GM12878 (cell line): ENCODE measurements at regions of chr12 and their contacts with region 1.

Region 1: DNA sequence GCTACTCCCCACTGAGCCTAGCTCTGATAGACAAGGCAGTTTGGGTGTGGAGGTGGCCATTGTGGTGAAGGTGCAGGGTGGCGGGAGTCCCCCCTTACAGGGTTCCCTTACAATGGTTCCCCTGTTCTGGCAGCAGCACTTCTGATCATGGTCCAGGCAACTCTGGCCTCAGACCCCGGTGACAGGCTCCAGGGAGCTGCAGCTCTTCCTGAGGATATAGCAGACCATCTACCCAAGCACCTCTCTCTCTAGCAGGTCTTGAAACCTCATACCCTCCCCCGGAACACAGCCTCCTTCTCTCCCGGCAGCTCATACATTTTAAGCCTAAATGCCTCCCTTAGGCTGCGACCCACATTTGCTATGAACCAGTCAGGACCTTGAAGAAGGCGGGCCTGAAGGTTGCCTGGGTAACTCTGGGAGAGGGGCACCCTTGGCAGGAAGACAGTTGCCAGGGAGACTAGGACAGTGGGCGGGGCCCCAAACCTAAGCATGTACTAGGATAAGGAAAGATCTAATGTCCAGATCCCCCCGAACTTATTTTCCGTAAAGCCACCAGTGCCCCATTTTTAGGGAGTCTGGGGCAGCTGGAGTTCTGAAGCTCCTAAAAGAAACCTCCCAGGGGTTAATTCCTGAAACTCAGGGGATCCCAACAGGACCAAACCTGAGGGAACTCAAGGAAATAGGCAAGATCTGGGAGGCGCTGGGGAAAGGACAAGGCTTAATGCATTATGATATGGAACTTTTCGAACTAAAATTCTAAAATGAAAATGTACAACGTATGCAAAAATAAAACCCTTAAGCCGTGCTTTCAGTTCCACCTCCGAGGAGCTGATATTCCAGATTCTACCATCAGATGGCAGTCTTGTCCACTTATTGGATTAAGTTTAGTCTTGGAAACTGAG is 4.5 kb upstream of the GDF11 start:
- DNase-seq: peak; percentile 77
- ATAC-seq: peak; percentile 93
- H3K4me3 ChIP-seq: peak overlapping the region; percentile 78
- H3K27ac ChIP-seq: peak overlapping the region; percentile 45
- H3K4me1 ChIP-seq: peaks cover 7% of the 10 kb centered on the region
- H3K27me3 ChIP-seq: no peaks in the 10 kb centered on the region
- CTCF ChIP-seq: peak; percentile 68 to 89 (median 87); a peak in 5 of 6 replicates
- EP300 ChIP-seq: no peak
- POLR2A ChIP-seq: no peak
- RAD21 ChIP-seq: peak; percentile 96

Region 2: DNA sequence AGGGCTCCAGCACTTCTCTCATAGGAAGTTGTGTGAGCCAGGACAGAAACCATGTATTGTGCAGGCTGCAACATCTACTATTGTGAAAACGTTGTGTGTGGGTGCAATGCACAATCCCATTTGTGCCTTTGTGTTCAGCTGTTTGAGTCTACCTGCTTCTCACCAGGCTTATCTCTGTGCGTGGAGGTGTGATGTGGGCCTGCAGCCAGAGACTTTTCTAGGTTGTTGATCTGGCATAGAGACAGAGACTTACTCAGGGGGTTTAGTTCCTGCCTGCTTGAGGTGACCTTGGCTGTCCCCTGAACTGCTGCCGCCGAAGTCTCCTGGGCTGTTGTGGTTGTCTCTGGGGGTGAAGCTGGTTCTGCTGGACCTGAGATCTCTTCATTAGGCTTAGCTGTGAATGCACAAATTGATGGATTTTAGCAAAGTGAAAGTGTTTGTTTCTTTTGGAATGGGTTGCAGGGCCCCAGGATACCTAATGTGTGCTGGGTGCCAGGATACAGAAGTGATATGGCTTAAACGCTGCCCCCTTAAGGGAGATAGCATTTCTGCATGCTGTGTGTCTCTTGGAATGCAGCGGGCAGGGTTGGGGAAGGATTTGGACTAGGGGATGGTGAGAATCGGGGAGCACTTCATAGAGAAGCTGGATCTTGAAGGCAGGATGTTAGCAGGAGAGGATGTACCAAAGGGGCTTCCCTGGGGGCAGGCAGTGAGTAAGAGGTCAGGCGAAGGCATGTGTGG is 1106.2 kb before region 1 on chr12:
- CTCF ChIA-PET with region 1: no interaction called
- POLR2A ChIA-PET with region 1: no interaction called
- RAD21 ChIA-PET with region 1: no interaction called
- SMC1A ChIA-PET with region 1: no interaction called
- in situ Hi-C with region 1: no loop called
- intact Hi-C with region 1: no loop called
- DNase-seq: no peak
- ATAC-seq: no peak
- H3K4me3 ChIP-seq: no peak overlapping the region
- H3K27ac ChIP-seq: no peak overlapping the region
- H3K4me1 ChIP-seq: no peaks in the 10 kb centered on the region
- H3K27me3 ChIP-seq: no peaks in the 10 kb centered on the region; a peak in 1 of 4 replicates
- CTCF ChIP-seq: no peak
- EP300 ChIP-seq: no peak
- POLR2A ChIP-seq: no peak
- RAD21 ChIP-seq: no peak

Region 3: GRCh38 chr12:54958048-54958658 is 780.2 kb before region 1 on chr12:
- CTCF ChIA-PET with region 1: no interaction called
- POLR2A ChIA-PET with region 1: no interaction called
- RAD21 ChIA-PET with region 1: no interaction called
- SMC1A ChIA-PET with region 1: no interaction called
- in situ Hi-C with region 1: no loop called
- intact Hi-C with region 1: no loop called
- DNase-seq: peak; percentile 44
- ATAC-seq: peak; percentile 70
- H3K4me3 ChIP-seq: no peak overlapping the region
- H3K27ac ChIP-seq: no peak overlapping the region
- H3K4me1 ChIP-seq: peaks cover 19% of the 10 kb centered on the region
- H3K27me3 ChIP-seq: no peaks in the 10 kb centered on the region
- CTCF ChIP-seq: peak; percentile 47 to 84 (median 60); a peak in 4 of 6 replicates
- EP300 ChIP-seq: no peak
- POLR2A ChIP-seq: no peak
- RAD21 ChIP-seq: peak; percentile 88

Region 4: DNA sequence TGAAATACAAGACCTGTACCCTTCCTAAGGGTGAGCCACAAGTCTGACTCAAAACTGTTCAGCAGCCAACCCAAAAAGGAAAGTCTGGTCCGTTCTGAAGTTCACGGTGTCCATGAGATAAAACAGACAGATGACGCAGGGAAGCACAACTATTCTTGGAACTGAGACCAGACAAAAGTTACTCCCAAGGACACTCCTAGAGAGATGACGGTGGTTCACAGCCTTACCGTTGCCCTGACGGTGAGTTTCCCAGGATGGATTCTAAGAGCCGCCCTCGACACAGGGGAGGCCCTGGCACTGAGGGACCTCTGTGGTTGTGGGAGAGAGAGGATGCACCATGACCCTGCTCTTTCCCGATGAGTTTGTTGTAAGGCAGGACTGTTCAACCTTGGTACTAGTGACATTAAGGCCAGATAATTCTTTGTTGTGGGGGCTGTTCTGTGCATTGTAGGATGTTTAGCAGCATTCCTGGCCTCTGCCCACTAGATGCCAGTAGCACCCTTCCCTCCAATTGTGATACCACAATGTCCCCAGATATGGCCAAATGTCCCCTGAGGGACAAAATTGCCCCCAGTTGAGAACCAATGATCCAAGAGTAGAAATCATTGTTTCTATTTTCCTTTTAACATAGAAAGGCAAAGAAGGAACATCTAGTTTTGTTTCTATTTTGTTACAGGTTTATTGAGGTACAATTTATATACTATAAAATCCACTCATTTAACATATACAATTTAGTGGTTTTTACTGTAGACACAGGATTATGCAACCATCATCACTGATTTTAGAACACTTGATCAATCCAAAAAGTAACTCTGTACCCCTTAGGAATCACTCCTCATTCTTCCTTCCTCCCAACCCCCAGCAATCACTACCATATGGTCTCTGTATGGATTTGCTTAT is 78.6 kb before region 1 on chr12:
- CTCF ChIA-PET with region 1: interaction called, 39 read pairs
- POLR2A ChIA-PET with region 1: no interaction called
- RAD21 ChIA-PET with region 1: interaction called, 12 read pairs
- SMC1A ChIA-PET with region 1: interaction called, 17 read pairs
- in situ Hi-C with region 1: no loop called
- intact Hi-C with region 1: loop called (anchors 1 kb)
- DNase-seq: no peak
- ATAC-seq: peak; percentile 85
- H3K4me3 ChIP-seq: no peak overlapping the region
- H3K27ac ChIP-seq: no peak overlapping the region
- H3K4me1 ChIP-seq: no peaks in the 10 kb centered on the region
- H3K27me3 ChIP-seq: no peaks in the 10 kb centered on the region
- CTCF ChIP-seq: peak; percentile 50 to 66 (median 66)
- EP300 ChIP-seq: no peak
- POLR2A ChIP-seq: no peak
- RAD21 ChIP-seq: peak; percentile 84

Region 5: DNA sequence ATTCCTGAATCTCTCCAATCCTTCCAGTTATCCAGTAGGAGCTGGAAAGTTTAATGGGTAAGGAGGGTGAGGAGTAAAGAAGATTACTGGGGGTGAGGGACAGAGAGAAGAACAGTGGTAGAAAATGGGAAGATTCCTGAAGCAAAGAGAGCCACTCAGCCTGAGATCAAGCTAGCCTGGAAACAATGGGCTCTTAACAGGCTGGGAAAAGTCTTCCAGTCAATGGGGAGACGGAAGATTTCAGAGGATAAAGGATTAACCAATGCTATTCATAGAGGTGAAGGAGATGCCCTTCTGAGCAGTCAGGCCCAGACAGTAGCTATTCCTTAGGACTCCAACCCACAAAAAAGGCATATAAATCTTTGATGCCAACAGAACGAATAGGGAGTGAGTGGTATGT is 19.3 kb after region 1 on chr12:
- CTCF ChIA-PET with region 1: interaction called, 12 read pairs
- POLR2A ChIA-PET with region 1: interaction called, 4 read pairs
- RAD21 ChIA-PET with region 1: interaction called, 3 read pairs
- SMC1A ChIA-PET with region 1: interaction called, 7 read pairs
- in situ Hi-C with region 1: no loop called
- intact Hi-C with region 1: no loop called
- DNase-seq: no peak
- ATAC-seq: no peak
- H3K4me3 ChIP-seq: no peak overlapping the region
- H3K27ac ChIP-seq: no peak overlapping the region
- H3K4me1 ChIP-seq: no peaks in the 10 kb centered on the region
- H3K27me3 ChIP-seq: no peaks in the 10 kb centered on the region
- CTCF ChIP-seq: no peak
- EP300 ChIP-seq: no peak
- POLR2A ChIP-seq: no peak
- RAD21 ChIP-seq: no peak

Region 6: GRCh38 chr12:55829967-55830600 is 91.7 kb after region 1 on chr12:
- CTCF ChIA-PET with region 1: interaction called, 19 read pairs
- POLR2A ChIA-PET with region 1: interaction called, 13 read pairs
- RAD21 ChIA-PET with region 1: interaction called, 11 read pairs
- SMC1A ChIA-PET with region 1: interaction called, 15 read pairs
- in situ Hi-C with region 1: no loop called
- intact Hi-C with region 1: loop called (anchors 2 kb)
- DNase-seq: no peak
- ATAC-seq: peak; percentile 25
- H3K4me3 ChIP-seq: peak overlapping the region; percentile 96
- H3K27ac ChIP-seq: peak overlapping the region; percentile 76
- H3K4me1 ChIP-seq: peaks cover 21% of the 10 kb centered on the region; the same call in 1 of the 2 replicates
- H3K27me3 ChIP-seq: no peaks in the 10 kb centered on the region
- CTCF ChIP-seq: no peak
- EP300 ChIP-seq: no peak
- POLR2A ChIP-seq: 0 out of 2 replicates have a peak, but pooled peaks have one; percentile 20
- RAD21 ChIP-seq: 0 out of 2 replicates have a peak, but pooled peaks have one; percentile 13

Region 7: GRCh38 chr12:55885113-55885512 is 146.7 kb after region 1 on chr12:
- CTCF ChIA-PET with region 1: no interaction called
- POLR2A ChIA-PET with region 1: no interaction called
- RAD21 ChIA-PET with region 1: no interaction called
- SMC1A ChIA-PET with region 1: no interaction called
- in situ Hi-C with region 1: no loop called
- intact Hi-C with region 1: no loop called
- DNase-seq: no peak
- ATAC-seq: no peak
- H3K4me3 ChIP-seq: no peak overlapping the region
- H3K27ac ChIP-seq: no peak overlapping the region
- H3K4me1 ChIP-seq: no peaks in the 10 kb centered on the region; the same call in 1 of the 2 replicates
- H3K27me3 ChIP-seq: no peaks in the 10 kb centered on the region
- CTCF ChIP-seq: no peak
- EP300 ChIP-seq: no peak
- POLR2A ChIP-seq: no peak
- RAD21 ChIP-seq: no peak

Region 8: DNA sequence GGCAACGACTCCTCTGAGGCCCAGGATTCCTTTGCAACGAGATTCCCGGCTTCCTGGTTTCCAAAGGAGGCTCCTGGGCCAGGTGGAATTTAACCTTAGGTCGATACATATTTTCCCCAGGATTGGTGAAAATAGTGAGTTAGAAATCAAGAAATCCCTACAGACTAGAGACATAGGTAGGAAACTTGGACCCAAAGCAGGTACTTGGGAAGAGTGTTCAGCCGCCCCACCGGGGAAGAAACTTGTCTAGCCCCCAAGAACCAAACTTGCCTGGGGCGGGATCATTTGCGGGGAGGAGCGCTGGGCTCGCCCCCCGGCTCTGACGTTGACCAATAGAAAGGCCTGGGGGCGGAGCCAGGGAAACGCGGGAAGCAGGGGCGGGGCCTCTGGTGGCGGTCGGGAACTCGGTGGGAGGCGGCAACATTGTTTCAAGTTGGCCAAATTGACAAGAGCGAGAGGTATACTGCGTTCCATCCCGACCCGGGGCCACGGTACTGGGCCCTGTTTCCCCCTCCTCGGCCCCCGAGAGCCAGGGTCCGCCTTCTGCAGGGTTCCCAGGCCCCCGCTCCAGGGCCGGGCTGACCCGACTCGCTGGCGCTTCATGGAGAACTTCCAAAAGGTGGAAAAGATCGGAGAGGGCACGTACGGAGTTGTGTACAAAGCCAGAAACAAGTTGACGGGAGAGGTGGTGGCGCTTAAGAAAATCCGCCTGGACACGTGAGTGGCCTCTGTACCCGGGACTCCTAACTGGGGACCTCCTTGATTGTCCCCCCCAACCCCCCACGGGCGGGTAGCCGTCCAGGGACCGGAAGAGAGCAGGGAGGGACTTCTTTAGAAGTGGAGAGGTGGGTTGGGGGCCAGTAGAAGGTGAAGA is 228.3 kb after region 1 on chr12 and contains the start of gene CDK2:
- CTCF ChIA-PET with region 1: interaction called, 11 read pairs
- POLR2A ChIA-PET with region 1: interaction called, 4 read pairs
- RAD21 ChIA-PET with region 1: interaction called, 11 read pairs
- SMC1A ChIA-PET with region 1: interaction called, 6 read pairs
- in situ Hi-C with region 1: no loop called
- intact Hi-C with region 1: no loop called
- DNase-seq: peak; percentile 40
- ATAC-seq: peak; percentile 91
- H3K4me3 ChIP-seq: peak within 1 kb of the TSS; percentile 96
- H3K27ac ChIP-seq: peak within 1 kb of the TSS; percentile 79
- H3K4me1 ChIP-seq: peaks cover 15% of the 10 kb centered on the region
- H3K27me3 ChIP-seq: no peaks in the 10 kb centered on the region
- CTCF ChIP-seq: no peak
- EP300 ChIP-seq: no peak
- POLR2A ChIP-seq: peak; percentile 81
- RAD21 ChIP-seq: no peak
- polyA plus RNA-seq, gene CDK2: 13.1 to 16.1 TPM

Region 9: GRCh38 chr12:56041552-56042429 is 303.4 kb after region 1 on chr12 and contains the start of gene RPS26:
- CTCF ChIA-PET with region 1: interaction called, 64 read pairs
- POLR2A ChIA-PET with region 1: interaction called, 12 read pairs
- RAD21 ChIA-PET with region 1: interaction called, 32 read pairs
- SMC1A ChIA-PET with region 1: interaction called, 37 read pairs
- in situ Hi-C with region 1: no loop called
- intact Hi-C with region 1: loop called (anchors 1 kb)
- DNase-seq: peak; percentile 98
- ATAC-seq: peak; percentile 96
- H3K4me3 ChIP-seq: peak within 1 kb of the TSS; percentile 98
- H3K27ac ChIP-seq: peak within 1 kb of the TSS; percentile 98
- H3K4me1 ChIP-seq: peaks cover 13% of the 10 kb centered on the region
- H3K27me3 ChIP-seq: no peaks in the 10 kb centered on the region
- CTCF ChIP-seq: peak; percentile 46 to 64 (median 61)
- EP300 ChIP-seq: peak in 1 of 2 experiments; percentile 60; a peak in 2 of 4 replicates
- POLR2A ChIP-seq: peak; percentile 100
- RAD21 ChIP-seq: peak; percentile 85
- polyA plus RNA-seq, gene RPS26: 2,920 to 3,147 TPM